HEK293 (cell line): ENCODE measurements at regions of chr3 and their contacts with region 1.

Region 1: GRCh38 chr3:149501524-149501923 is 27.0 kb downstream of the TM4SF4 start:
- H3K4me3 ChIP-seq: no peak overlapping the region
- H3K27ac ChIP-seq: no peak overlapping the region
- H3K4me1 ChIP-seq: no peaks in the 10 kb centered on the region
- CTCF ChIP-seq: no peak

Region 2: DNA sequence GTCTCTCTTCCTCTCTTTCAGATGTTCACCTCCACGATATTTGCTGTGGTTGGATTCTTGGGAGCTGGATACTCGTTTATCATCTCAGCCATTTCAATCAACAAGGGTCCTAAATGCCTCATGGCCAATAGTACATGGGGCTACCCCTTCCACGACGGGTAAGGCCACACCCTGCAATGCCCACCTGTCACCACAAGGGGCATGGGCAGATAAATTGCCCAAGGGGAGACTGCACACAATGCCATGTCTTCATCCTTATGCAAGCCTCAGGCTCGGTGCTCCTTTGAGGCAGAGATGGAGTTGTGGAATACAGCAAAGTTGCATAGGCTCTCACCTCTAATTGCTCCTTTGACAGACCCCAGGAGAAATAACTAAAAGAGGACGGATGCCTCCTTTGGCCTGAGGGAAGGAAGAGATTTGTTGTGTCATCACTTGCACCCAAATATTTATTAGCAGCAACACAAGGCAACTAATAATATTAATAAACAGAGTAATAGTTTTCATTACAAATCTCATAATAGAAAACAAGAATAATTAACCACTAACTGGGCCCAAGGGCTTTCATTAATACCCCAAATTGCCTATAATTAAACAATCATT is 13.8 kb before region 1 on chr3:
- CTCF ChIA-PET with region 1: interaction called, 10 read pairs
- POLR2A ChIA-PET with region 1: no interaction called
- H3K4me3 ChIP-seq: no peak overlapping the region
- H3K27ac ChIP-seq: no peak overlapping the region
- H3K4me1 ChIP-seq: no peaks in the 10 kb centered on the region
- CTCF ChIP-seq: no peak

Region 3: DNA sequence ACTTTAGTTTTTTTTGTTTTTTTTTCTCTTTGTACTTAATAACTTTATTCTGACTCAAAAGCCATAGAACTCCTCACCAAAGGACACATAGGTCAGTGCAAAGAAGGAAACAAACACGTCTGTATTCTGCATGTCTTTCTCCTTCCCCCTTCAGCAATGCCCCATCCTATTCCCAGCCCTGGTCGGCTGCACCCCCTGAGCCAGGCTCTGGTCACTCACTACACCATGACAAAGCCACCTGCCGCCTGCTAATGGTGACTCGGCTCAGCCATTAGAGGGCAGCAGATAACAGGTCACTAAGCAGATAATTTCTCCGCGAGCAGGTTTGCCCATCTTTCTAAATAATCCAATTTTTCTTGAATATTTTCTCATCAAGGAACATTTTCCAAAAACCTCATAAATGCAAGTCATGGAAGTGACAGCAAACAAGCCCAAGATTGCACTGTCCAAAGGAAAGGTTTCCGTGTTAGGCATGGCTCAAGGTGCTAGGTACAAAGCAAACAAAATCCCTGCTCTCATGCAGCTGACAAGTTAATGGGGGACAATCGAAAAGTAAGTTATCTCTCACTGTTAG is 10.8 kb after region 1 on chr3:
- CTCF ChIA-PET with region 1: no interaction called
- POLR2A ChIA-PET with region 1: no interaction called
- H3K4me3 ChIP-seq: no peak overlapping the region; the same call in 1 of the 2 replicates
- H3K27ac ChIP-seq: no peak overlapping the region
- H3K4me1 ChIP-seq: no peaks in the 10 kb centered on the region
- CTCF ChIP-seq: peak; percentile 64

Region 4: GRCh38 chr3:149553781-149554451 is 52.4 kb after region 1 on chr3:
- CTCF ChIA-PET with region 1: no interaction called
- POLR2A ChIA-PET with region 1: no interaction called
- H3K4me3 ChIP-seq: no peak overlapping the region
- H3K27ac ChIP-seq: no peak overlapping the region
- H3K4me1 ChIP-seq: no peaks in the 10 kb centered on the region
- CTCF ChIP-seq: no peak